RWPE1 (cell line): ENCODE measurements at regions of chr9 and their contacts with region 1.

Region 1: GRCh38 chr9:133184962-133185361 is 21.2 kb upstream of the GBGT1 start:
- DNase-seq: peak; percentile 93
- H3K27ac ChIP-seq: no peak overlapping the region
- CTCF ChIP-seq: peak; percentile 85

Region 2: DNA sequence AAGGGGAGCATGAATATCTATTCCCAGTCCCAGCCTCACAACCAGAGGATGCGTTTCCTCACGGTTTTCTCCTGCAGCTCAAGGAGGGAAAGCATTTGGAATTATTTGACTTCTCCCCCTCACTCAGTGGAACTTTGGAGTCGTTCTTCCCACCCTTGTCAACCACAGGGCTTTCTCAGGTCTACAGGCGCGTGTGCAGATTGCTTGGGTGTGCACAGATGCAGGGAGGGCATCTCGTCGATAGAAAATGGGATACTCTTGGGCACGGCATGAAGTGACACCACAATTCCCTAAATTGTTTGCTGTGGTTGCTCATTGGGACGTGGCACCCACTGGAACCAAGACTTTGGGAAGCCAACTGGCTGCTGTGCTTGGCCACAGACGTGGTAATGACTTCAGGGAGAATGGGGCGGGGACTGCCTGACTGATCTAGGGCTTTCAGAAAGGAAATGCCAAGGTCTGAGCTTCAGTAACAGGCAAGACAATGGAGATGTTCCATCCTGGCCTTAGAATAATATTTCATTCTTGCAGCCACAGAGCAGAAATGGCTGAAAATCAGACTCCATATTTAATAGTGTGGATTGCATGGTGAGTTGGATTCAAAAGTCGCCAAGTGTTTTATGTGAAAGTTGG is 36.3 kb after region 1 on chr9:
- CTCF ChIA-PET with region 1: interaction called, 10 read pairs
- POLR2A ChIA-PET with region 1: no interaction called
- DNase-seq: no peak
- H3K27ac ChIP-seq: no peak overlapping the region
- CTCF ChIP-seq: no peak

Region 3: GRCh38 chr9:133275105-133276000 is 90.4 kb after region 1 on chr9 and contains the start of gene ABO:
- CTCF ChIA-PET with region 1: interaction called, 11 read pairs
- POLR2A ChIA-PET with region 1: interaction called, 7 read pairs
- DNase-seq: no peak
- H3K27ac ChIP-seq: no peak within 1 kb of the TSS
- CTCF ChIP-seq: no peak; the same call in 1 of the 2 replicates

Region 4: GRCh38 chr9:133335878-133336811 is 151.2 kb after region 1 on chr9 and contains the start of gene SURF6:
- CTCF ChIA-PET with region 1: interaction called, 45 read pairs
- POLR2A ChIA-PET with region 1: no interaction called
- DNase-seq: peak; percentile 90
- H3K27ac ChIP-seq: peak within 1 kb of the TSS; percentile 76
- CTCF ChIP-seq: no peak